ENCODE measurements at regions of chr2 and their contacts with region 1.

Region 1: DNA sequence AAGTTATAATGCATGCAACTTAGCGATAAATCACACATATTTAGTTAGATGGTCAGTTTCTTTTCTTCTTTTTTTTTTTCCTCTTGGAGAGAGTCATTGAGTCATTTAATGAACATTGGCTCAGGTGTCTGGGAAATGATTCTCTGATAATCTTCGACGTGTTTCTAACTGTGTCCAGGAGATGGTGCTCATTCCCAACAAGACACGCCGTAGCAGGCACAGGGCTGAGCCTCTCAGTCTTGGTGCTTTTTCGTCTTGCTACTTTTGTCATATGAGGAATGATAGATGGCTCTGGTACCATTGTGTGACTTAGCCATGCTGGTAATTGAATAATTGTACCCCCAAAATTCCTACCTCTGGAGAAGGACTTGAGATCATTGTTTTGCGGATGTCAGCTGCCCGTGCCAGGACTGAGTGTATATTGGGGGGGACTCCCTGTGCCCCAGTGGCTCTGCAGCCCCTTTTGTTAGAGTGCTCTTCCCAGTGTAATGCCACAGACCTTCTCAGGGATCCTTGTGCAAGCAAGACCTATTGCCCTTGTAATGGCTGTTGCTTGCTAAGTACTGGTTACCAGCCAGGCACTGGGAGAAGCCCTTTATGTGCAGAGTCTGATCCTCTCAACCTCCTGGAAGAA is 107.6 kb upstream of the CYRIA start:
- DNase-seq: no peak
- ATAC-seq: peak; percentile 67
- H3K4me3 Mint-ChIP-seq: no peak overlapping the region
- H3K27ac Mint-ChIP-seq: no peak overlapping the region
- H3K4me1 Mint-ChIP-seq: peaks cover 3% of the 10 kb centered on the region
- H3K27me3 Mint-ChIP-seq: peaks cover 19% of the 10 kb centered on the region
- CTCF ChIP-seq: peak; percentile 35

Region 2: DNA sequence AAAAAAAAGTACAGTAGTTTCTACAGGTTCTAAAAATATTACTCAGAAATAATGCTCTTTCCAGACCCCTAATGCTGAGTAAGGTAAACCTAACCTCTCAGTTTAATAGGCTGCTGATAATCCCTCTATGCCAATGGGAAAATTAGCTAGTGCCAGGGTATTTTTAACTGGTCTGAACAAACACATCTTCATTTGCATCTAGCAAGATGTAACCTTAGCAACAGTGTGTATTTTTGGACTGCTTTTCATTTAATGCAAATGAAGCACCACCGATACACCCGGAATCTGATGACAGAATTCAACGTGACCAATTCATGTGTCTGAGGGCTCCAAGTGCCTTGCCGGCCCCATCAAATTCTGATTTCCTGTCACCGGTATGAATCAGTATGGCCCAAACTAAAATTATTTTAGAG is 60.2 kb before region 1 on chr2:
- CTCF ChIA-PET with region 1: no interaction called
- POLR2A ChIA-PET with region 1: no interaction called
- intact Hi-C with region 1: no loop called
- DNase-seq: no peak
- ATAC-seq: peak; percentile 80
- H3K4me3 Mint-ChIP-seq: peak overlapping the region; percentile 72
- H3K27ac Mint-ChIP-seq: peak overlapping the region; percentile 90
- H3K4me1 Mint-ChIP-seq: peaks cover 58% of the 10 kb centered on the region
- H3K27me3 Mint-ChIP-seq: no peaks in the 10 kb centered on the region
- CTCF ChIP-seq: no peak

Region 3: GRCh38 chr2:16900405-16901025 is 127.3 kb after region 1 on chr2:
- CTCF ChIA-PET with region 1: no interaction called
- POLR2A ChIA-PET with region 1: no interaction called
- intact Hi-C with region 1: loop called (anchors 2 kb)
- DNase-seq: no peak
- ATAC-seq: peak; percentile 42
- H3K4me3 Mint-ChIP-seq: no peak overlapping the region
- H3K27ac Mint-ChIP-seq: no peak overlapping the region
- H3K4me1 Mint-ChIP-seq: no peaks in the 10 kb centered on the region
- H3K27me3 Mint-ChIP-seq: no peaks in the 10 kb centered on the region
- CTCF ChIP-seq: no peak

Region 4: DNA sequence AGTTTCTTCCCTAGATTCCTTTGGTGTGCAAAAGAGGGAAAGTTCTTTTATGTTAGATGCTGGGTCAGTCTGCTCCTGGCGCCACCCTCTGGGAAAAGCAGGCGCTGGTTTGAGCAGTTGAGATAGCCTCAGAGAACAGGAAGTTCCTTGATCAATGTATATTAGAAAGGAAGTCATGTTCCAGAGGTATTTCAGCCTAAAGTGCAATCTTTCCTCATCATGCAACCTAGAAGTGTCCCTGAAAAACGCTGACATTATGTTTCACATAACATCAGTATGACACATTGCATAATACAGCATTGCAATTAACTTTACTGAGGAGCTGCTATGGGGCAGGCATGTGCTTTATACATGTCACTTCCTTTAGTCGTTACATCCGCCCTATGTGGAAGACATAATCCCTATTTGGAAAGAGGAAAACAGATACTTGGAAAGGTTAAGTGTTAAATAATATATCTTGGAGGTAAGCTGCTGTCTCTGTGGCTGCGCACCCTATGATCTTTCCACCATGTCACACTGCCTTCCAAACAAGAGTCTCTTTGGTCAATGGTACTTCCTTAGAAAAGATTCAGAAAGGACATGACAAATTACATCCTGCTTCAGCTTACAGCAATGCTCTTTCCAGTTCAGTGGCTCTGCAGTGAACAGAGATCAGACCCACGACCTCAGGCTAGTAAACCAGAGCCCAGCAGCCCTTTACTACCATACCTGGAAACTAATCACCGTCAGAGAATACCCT is 375.4 kb after region 1 on chr2:
- CTCF ChIA-PET with region 1: interaction called, 3 read pairs
- POLR2A ChIA-PET with region 1: no interaction called
- intact Hi-C with region 1: loop called (anchors 1 kb)
- DNase-seq: no peak
- ATAC-seq: peak; percentile 37
- H3K4me3 Mint-ChIP-seq: no peak overlapping the region
- H3K27ac Mint-ChIP-seq: peak overlapping the region; percentile 25
- H3K4me1 Mint-ChIP-seq: peaks cover 27% of the 10 kb centered on the region
- H3K27me3 Mint-ChIP-seq: no peaks in the 10 kb centered on the region
- CTCF ChIP-seq: no peak

Region 5: DNA sequence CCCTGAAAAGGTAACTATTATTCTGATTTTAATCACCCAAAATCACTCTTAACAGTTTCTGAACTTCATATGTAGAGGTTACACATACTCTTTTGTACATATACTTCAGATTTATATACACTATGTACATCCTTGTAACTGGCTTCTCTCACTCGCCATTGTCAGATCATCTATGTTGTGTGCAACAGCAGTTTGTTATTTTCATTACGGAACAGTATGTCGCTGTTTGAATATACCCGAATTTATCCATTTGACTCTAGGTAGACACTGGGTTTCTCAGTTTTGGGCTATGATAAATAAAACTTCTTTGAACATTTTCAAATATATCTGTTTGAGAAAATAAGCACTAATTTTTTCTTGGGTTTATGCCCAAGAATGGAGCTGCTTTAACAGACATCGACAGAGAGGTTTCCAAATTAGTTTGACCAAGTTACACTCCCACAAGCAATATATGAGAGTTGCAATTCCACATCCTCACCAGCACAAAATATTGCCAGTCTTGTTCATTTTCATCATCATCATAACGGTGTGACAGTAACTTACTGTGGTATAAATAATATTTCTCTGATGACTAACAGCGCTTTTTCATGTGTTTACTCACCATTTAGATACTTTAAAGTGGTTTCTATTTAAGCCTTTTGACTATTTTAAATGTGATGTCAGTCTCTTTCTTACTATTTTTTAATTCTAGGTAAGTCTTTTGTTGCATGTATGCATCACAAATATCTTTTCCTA is 899.6 kb after region 1 on chr2:
- CTCF ChIA-PET with region 1: interaction called, 18 read pairs
- POLR2A ChIA-PET with region 1: no interaction called
- intact Hi-C with region 1: loop called (anchors 1 kb)
- DNase-seq: no peak
- ATAC-seq: no peak
- H3K4me3 Mint-ChIP-seq: no peak overlapping the region
- H3K27ac Mint-ChIP-seq: no peak overlapping the region
- H3K4me1 Mint-ChIP-seq: no peaks in the 10 kb centered on the region
- H3K27me3 Mint-ChIP-seq: no peaks in the 10 kb centered on the region
- CTCF ChIP-seq: no peak

Region 6: GRCh38 chr2:18378020-18378653 is 1604.9 kb after region 1 on chr2:
- CTCF ChIA-PET with region 1: no interaction called
- POLR2A ChIA-PET with region 1: no interaction called
- intact Hi-C with region 1: loop called (anchors 1 kb)
- DNase-seq: no peak
- ATAC-seq: no peak
- H3K4me3 Mint-ChIP-seq: no peak overlapping the region
- H3K27ac Mint-ChIP-seq: no peak overlapping the region
- H3K4me1 Mint-ChIP-seq: no peaks in the 10 kb centered on the region
- H3K27me3 Mint-ChIP-seq: peaks cover 11% of the 10 kb centered on the region
- CTCF ChIP-seq: no peak

Measured in activated B cell treated with CpG ODN at 0.5 μM for 24 hours (primary cell).